GM12878 (cell line): ENCODE measurements at regions of chr4 and their contacts with region 1.

Region 1: GRCh38 chr4:169485791-169486742 is 126.3 kb downstream of the NEK1 start:
- DNase-seq: peak; percentile 68
- ATAC-seq: peak; percentile 68
- H3K4me3 ChIP-seq: no peak overlapping the region
- H3K27ac ChIP-seq: no peak overlapping the region
- H3K4me1 ChIP-seq: 0 out of 2 replicates have a peak, but pooled peaks cover 5% of the 10 kb centered on the region
- H3K27me3 ChIP-seq: no peaks in the 10 kb centered on the region
- CTCF ChIP-seq: peak; percentile 43 to 82 (median 67); a peak in 5 of 6 replicates
- EP300 ChIP-seq: no peak
- POLR2A ChIP-seq: no peak
- RAD21 ChIP-seq: peak; percentile 97

Region 2: DNA sequence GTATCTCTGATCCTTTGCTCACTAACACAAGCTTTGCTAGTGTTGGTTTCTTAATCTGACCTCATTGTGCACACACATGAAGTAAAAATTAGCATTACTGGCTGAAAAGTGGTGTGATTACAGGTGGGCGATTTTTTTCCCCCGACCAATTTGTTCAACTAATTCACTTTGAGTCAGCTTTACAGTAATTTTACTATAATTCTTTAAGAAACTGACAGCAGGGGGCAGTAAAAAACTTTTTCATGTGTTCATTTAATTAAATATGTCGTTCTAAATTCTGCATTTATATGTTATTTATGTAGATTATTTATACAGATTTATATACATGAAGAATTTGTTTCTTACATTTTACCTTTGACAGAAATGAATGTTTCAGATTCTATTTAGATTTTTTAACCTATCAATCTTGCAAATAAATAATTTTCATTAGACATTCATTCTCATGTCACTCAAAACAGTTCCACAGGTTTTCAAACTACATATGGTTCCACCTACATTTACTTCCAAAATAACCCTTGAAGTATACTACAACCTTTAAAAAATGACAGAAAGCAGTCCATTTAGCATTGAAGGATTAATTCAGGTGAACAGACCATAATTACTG is 971.7 kb before region 1 on chr4:
- CTCF ChIA-PET with region 1: no interaction called
- POLR2A ChIA-PET with region 1: no interaction called
- RAD21 ChIA-PET with region 1: no interaction called
- SMC1A ChIA-PET with region 1: no interaction called
- in situ Hi-C with region 1: no loop called
- intact Hi-C with region 1: loop called (anchors 5 kb)
- DNase-seq: no peak
- ATAC-seq: 0 out of 3 replicates have a peak, but pooled peaks have one; percentile 20
- H3K4me3 ChIP-seq: no peak overlapping the region
- H3K27ac ChIP-seq: no peak overlapping the region
- H3K4me1 ChIP-seq: no peaks in the 10 kb centered on the region
- H3K27me3 ChIP-seq: no peaks in the 10 kb centered on the region
- CTCF ChIP-seq: peak in 2 of 3 experiments; percentile 20 to 26; a peak in 2 of 6 replicates
- EP300 ChIP-seq: no peak
- POLR2A ChIP-seq: no peak
- RAD21 ChIP-seq: 0 out of 2 replicates have a peak, but pooled peaks have one; percentile 13

Region 3: DNA sequence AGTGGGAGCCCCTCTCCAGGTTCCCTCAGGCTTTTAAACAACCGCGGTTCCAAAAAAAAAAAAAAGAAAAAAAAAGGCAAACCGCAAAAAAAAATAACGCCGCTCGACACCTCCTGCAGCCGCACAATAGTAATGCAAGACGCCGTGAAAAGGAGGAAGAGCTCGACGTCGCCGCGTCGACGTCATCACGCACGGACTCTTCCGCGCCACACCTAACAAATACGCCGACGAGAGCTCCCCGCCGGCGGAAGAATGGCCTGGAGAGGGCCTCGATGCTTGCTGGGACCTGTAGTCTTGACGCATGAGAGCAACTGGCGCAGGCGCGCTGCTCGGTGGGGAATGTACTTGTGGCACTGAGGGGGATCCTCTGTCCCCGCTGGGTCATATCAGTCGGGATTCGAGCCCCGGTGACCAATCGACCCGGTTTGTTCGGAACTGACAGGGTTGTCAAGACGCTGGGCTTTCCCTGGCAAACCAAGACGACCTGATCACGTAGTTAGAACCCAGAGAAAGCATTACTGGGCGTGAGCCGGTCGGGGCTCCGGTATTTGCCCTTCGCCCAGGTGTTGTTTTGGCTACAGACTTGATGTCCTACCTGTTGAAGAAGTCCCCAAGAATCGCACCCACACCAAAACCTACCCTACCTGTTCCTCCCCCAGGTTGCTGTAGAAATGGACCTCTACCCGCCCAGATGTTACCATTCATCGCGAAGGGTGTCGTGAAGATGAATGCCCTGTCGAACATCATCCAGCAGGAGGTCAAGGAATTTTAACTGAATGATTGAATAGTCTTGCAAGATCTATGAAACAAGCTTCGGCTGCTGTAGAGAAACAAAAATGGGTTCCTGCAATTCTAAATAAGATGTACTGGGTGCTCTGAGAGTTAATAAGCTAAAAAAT is 475.7 kb before region 1 on chr4 and contains the start of gene CBR4:
- CTCF ChIA-PET with region 1: interaction called, 15 read pairs
- POLR2A ChIA-PET with region 1: no interaction called
- RAD21 ChIA-PET with region 1: interaction called, 23 read pairs
- SMC1A ChIA-PET with region 1: interaction called, 12 read pairs
- in situ Hi-C with region 1: loop called (anchors 5 kb)
- intact Hi-C with region 1: loop called (anchors 5 kb)
- DNase-seq: peak; percentile 94
- ATAC-seq: peak; percentile 96
- H3K4me3 ChIP-seq: peak within 1 kb of the TSS; percentile 86
- H3K27ac ChIP-seq: peak within 1 kb of the TSS; percentile 91
- H3K4me1 ChIP-seq: no peaks in the 10 kb centered on the region
- H3K27me3 ChIP-seq: no peaks in the 10 kb centered on the region
- CTCF ChIP-seq: peak; percentile 6 to 36 (median 35); a peak in 2 of 6 replicates
- EP300 ChIP-seq: no peak; a peak in 1 of 4 replicates
- POLR2A ChIP-seq: peak; percentile 86
- RAD21 ChIP-seq: 0 out of 2 replicates have a peak, but pooled peaks have one; percentile 11
- polyA plus RNA-seq, gene CBR4: 21.4 to 36.2 TPM

Region 4: DNA sequence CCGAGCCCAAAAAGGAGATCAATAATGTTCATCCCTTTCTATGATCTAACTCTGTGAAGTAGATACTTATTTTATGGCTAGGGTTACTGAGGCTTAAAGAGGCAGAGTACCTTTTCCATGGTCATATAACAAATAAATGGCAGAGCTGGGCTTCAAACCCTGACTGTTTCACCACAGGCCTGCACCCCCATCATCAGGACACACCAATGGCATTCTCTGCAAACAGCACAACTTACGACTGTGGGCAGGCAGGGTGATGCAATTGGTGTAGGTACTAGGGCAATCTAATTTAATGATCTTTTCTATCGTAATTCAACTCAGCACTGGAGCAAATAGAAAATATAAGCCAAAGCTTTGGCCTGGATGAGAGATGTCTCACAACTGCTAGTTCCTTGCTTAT is 357.2 kb before region 1 on chr4:
- CTCF ChIA-PET with region 1: interaction called, 4 read pairs
- POLR2A ChIA-PET with region 1: no interaction called
- RAD21 ChIA-PET with region 1: interaction called, 3 read pairs
- SMC1A ChIA-PET with region 1: no interaction called
- in situ Hi-C with region 1: no loop called
- intact Hi-C with region 1: loop called (anchors 10 kb)
- DNase-seq: no peak
- ATAC-seq: no peak
- H3K4me3 ChIP-seq: no peak overlapping the region
- H3K27ac ChIP-seq: no peak overlapping the region
- H3K4me1 ChIP-seq: no peaks in the 10 kb centered on the region
- H3K27me3 ChIP-seq: no peaks in the 10 kb centered on the region
- CTCF ChIP-seq: no peak
- EP300 ChIP-seq: no peak
- POLR2A ChIP-seq: no peak
- RAD21 ChIP-seq: no peak

Region 5: DNA sequence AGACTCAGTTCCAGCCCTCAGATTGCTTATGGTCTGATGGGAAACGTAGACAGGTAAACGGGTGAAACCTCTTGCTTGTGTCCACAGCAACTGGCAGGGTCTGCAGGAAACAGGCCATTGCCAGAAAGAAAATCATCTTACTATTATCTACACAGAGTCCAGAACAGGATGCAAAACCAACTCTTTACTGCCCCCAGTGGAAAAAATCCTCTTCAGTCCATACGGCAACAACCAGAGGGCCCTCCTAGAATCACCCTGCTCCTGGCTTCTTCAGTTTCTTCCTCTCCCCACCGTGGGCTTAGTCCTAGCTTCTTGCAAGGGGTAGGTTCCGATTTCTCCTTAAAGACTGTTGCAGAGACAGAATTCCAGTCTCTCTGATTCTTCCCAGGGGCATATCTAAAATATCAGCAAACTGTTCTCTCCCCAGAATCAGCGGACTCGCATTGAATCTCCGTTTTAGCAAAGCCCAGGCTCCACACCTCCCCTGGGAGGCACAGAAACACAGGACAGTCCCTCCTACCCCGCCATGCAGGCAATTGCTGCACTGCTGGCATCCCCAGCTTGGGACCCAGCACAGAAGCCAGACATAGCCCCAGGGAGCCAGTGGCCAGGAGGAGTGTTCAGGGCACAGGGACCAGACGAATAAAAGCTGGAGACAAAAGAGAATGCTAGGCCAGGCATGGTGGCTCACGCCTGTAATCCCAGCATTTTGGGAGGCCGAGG is 174.3 kb before region 1 on chr4:
- CTCF ChIA-PET with region 1: no interaction called
- POLR2A ChIA-PET with region 1: no interaction called
- RAD21 ChIA-PET with region 1: interaction called, 4 read pairs
- SMC1A ChIA-PET with region 1: interaction called, 5 read pairs
- in situ Hi-C with region 1: no loop called
- intact Hi-C with region 1: loop called (anchors 2 kb)
- DNase-seq: peak; percentile 30
- ATAC-seq: peak; percentile 96
- H3K4me3 ChIP-seq: no peak overlapping the region
- H3K27ac ChIP-seq: no peak overlapping the region
- H3K4me1 ChIP-seq: no peaks in the 10 kb centered on the region
- H3K27me3 ChIP-seq: no peaks in the 10 kb centered on the region
- CTCF ChIP-seq: peak; percentile 42 to 45 (median 44)
- EP300 ChIP-seq: no peak
- POLR2A ChIP-seq: no peak
- RAD21 ChIP-seq: peak; percentile 71

Region 6: DNA sequence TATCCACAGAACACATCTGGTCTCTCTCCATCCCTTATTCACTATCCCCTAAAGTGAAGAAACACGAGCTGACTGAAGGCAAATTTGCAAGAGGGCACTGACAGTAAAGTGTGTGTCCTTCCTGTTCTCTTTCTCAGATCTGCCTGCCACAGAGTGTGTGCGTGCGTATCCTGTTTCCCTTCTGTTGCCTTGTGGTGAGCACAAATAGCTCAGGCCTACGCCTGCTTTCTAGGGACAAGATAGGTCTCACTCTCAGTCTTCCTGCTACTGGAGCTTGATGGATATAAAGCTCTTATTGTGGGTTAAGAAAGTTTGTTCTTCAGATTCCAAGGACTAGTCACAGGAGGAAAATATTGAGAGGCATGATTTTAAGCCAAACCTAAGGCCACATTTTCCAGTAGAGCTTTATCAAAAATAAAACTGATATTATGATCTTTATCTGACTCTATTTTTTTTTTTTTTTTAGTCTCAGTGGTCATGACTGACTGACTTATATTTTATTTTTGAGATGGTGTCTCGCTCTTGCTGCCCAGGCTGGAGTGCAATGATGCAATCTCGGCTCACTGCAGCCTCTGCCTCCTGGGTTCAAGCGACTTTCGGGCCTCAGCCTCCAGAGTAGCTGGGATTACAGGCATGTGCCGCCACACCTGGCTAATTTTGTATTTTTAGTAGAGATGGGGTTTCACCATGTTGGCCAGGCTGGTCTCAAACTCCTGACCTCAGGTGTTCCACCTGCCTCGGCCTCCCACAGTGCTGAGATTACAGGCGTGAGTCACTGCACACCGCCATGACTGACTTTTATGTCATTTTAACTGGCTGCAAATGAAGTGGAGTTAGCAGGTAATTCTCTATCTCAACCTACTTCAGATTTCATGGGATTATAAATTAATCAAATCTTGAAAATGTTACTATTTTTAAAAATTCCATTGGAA is 75.0 kb before region 1 on chr4:
- CTCF ChIA-PET with region 1: interaction called, 8 read pairs
- POLR2A ChIA-PET with region 1: no interaction called
- RAD21 ChIA-PET with region 1: interaction called, 5 read pairs
- SMC1A ChIA-PET with region 1: interaction called, 10 read pairs
- in situ Hi-C with region 1: no loop called
- intact Hi-C with region 1: no loop called
- DNase-seq: peak; percentile 93
- ATAC-seq: peak; percentile 97
- H3K4me3 ChIP-seq: 0 out of 2 replicates have a peak overlapping the region, but pooled peaks have one; percentile 46
- H3K27ac ChIP-seq: peak overlapping the region; percentile 63
- H3K4me1 ChIP-seq: peaks cover 22% of the 10 kb centered on the region
- H3K27me3 ChIP-seq: no peaks in the 10 kb centered on the region
- CTCF ChIP-seq: no peak
- EP300 ChIP-seq: peak; percentile 87 to 92
- POLR2A ChIP-seq: peak; percentile 61
- RAD21 ChIP-seq: peak; percentile 32; the same call in 1 of the 2 replicates

Region 7: GRCh38 chr4:169523796-169524195 is 37.7 kb after region 1 on chr4:
- CTCF ChIA-PET with region 1: no interaction called
- POLR2A ChIA-PET with region 1: no interaction called
- RAD21 ChIA-PET with region 1: no interaction called
- SMC1A ChIA-PET with region 1: no interaction called
- in situ Hi-C with region 1: no loop called
- intact Hi-C with region 1: no loop called
- DNase-seq: no peak
- ATAC-seq: no peak
- H3K4me3 ChIP-seq: no peak overlapping the region
- H3K27ac ChIP-seq: no peak overlapping the region
- H3K4me1 ChIP-seq: no peaks in the 10 kb centered on the region
- H3K27me3 ChIP-seq: no peaks in the 10 kb centered on the region
- CTCF ChIP-seq: no peak
- EP300 ChIP-seq: no peak
- POLR2A ChIP-seq: no peak
- RAD21 ChIP-seq: no peak